K562 (cell line): ENCODE measurements at regions of chr5 and their contacts with region 1.

Region 1: GRCh38 chr5:77775790-77776553 is at the start of gene TBCA:
- DNase-seq: peak; percentile 90 to 93 (median 92)
- ATAC-seq: peak; percentile 90
- H3K4me3 ChIP-seq: peak within 1 kb of the TSS; percentile 69
- H3K27ac ChIP-seq: peak within 1 kb of the TSS; percentile 95
- H3K4me1 ChIP-seq: peaks cover 11 to 23% of the 10 kb centered on the region in 2 experiments; a peak in 4 of 5 replicates
- H3K27me3 ChIP-seq: no peaks in the 10 kb centered on the region
- CTCF ChIP-seq: peak in 2 of 3 experiments; percentile 22 to 29; a peak in 4 of 6 replicates
- EP300 ChIP-seq: no peak
- POLR2A ChIP-seq: peak; percentile 89
- RAD21 ChIP-seq: no peak
- polyA plus RNA-seq, gene TBCA: 588 to 661 TPM

Region 2: GRCh38 chr5:77791356-77791755 is 15.4 kb after region 1 on chr5:
- CTCF ChIA-PET with region 1: no interaction called
- POLR2A ChIA-PET with region 1: interaction called, 11 read pairs
- in situ Hi-C with region 1: no loop called
- intact Hi-C with region 1: no loop called
- DNase-seq: no peak
- ATAC-seq: no peak
- H3K4me3 ChIP-seq: no peak overlapping the region
- H3K27ac ChIP-seq: no peak overlapping the region
- H3K4me1 ChIP-seq: no peaks in the 10 kb centered on the region
- H3K27me3 ChIP-seq: no peaks in the 10 kb centered on the region; a peak in 1 of 5 replicates
- CTCF ChIP-seq: no peak
- EP300 ChIP-seq: no peak
- POLR2A ChIP-seq: no peak
- RAD21 ChIP-seq: no peak

Region 3: DNA sequence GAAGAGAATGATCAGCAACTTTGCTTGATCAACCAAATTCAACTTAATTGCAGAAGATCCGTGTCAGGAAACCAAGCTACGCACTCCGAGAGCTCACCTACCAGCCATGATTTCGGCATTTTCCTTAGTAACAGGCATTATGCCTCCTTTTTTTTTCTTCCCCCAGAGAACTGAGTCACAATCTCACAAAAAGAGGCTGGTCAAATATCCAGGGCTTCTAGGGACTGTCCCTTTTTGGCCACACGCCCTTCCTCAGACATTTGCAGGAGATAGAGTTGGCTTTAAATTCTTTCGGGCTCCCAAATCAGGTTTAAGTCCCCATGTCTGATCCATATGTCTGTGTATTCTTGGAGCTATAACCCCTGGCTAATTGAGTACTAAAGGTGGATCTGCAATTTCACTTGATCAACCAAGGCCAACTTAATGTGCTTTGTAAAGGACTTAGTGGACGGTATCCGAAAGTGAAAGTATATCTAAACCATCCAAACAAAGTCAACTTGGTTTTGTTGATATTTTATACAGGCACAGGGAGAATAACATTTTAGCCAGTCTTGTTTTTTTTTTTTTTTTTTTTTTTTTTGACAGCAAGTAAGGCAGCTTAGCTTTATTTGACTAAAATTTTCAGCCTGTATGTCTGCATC is 101.0 kb after region 1 on chr5:
- CTCF ChIA-PET with region 1: no interaction called
- POLR2A ChIA-PET with region 1: no interaction called
- in situ Hi-C with region 1: no loop called
- intact Hi-C with region 1: no loop called
- DNase-seq: peak in 1 of 4 experiments; percentile 29
- ATAC-seq: no peak
- H3K4me3 ChIP-seq: no peak overlapping the region
- H3K27ac ChIP-seq: no peak overlapping the region
- H3K4me1 ChIP-seq: peaks cover 10 to 16% of the 10 kb centered on the region in 2 experiments; a peak in 3 of 5 replicates
- H3K27me3 ChIP-seq: peaks cover 2 to 12% of the 10 kb centered on the region in 2 experiments; a peak in 4 of 5 replicates
- CTCF ChIP-seq: no peak
- EP300 ChIP-seq: no peak
- POLR2A ChIP-seq: no peak
- RAD21 ChIP-seq: no peak

Region 4: GRCh38 chr5:78102500-78102899 is 326.5 kb after region 1 on chr5:
- CTCF ChIA-PET with region 1: no interaction called
- POLR2A ChIA-PET with region 1: no interaction called
- in situ Hi-C with region 1: no loop called
- intact Hi-C with region 1: no loop called
- DNase-seq: no peak
- ATAC-seq: no peak
- H3K4me3 ChIP-seq: no peak overlapping the region
- H3K27ac ChIP-seq: no peak overlapping the region
- H3K4me1 ChIP-seq: no peaks in the 10 kb centered on the region
- H3K27me3 ChIP-seq: no peaks in the 10 kb centered on the region
- CTCF ChIP-seq: no peak
- EP300 ChIP-seq: no peak
- POLR2A ChIP-seq: no peak
- RAD21 ChIP-seq: no peak